Psoas muscle (tissue), 8 donors: ENCODE measurements at regions of chr12 and their contacts with region 1.

Region 1: DNA sequence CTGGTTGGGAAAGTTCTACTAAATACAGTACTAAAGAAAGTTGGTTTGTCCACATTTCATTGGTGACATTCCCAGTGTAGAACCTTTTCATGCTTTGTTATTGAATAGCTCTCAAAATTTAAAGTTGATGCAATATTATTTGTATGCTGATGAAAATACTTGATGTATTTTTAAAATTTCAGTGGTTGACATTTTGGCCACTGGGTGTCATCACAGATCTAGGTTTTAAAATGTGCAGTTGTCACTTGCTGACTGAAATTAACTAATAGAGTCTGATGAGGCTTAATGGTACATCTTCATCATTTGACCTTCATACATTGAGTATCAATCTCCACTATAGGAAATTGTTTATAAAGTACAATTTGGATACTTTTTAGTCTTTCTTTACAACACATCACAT is 37.1 kb downstream of the CMAS start:
- DNase-seq: no peak
- ATAC-seq: no peak
- H3K4me3 ChIP-seq: no peak overlapping the region
- H3K27ac ChIP-seq: no peak overlapping the region
- H3K4me1 ChIP-seq: no peaks in the 10 kb centered on the region
- H3K27me3 ChIP-seq: no peaks in the 10 kb centered on the region
- CTCF ChIP-seq: peak; percentile 38

Region 2: GRCh38 chr12:21677622-21678277 is 405.4 kb before region 1 on chr12:
- intact Hi-C with region 1: no loop called
- DNase-seq: no peak
- ATAC-seq: no peak
- H3K4me3 ChIP-seq: no peak overlapping the region
- H3K27ac ChIP-seq: no peak overlapping the region
- H3K4me1 ChIP-seq: no peaks in the 10 kb centered on the region
- H3K27me3 ChIP-seq: no peaks in the 10 kb centered on the region
- CTCF ChIP-seq: no peak

Region 3: GRCh38 chr12:22443379-22444316 is 360.5 kb after region 1 on chr12:
- intact Hi-C with region 1: loop called (anchors 5 kb)
- DNase-seq: peak; percentile 18 to 49
- ATAC-seq: peak; percentile 78 to 94 (median 92)
- H3K4me3 ChIP-seq: no peak overlapping the region
- H3K27ac ChIP-seq: no peak overlapping the region
- H3K4me1 ChIP-seq: no peaks in the 10 kb centered on the region
- H3K27me3 ChIP-seq: no peaks in the 10 kb centered on the region
- CTCF ChIP-seq: peak; percentile 71

Region 4: DNA sequence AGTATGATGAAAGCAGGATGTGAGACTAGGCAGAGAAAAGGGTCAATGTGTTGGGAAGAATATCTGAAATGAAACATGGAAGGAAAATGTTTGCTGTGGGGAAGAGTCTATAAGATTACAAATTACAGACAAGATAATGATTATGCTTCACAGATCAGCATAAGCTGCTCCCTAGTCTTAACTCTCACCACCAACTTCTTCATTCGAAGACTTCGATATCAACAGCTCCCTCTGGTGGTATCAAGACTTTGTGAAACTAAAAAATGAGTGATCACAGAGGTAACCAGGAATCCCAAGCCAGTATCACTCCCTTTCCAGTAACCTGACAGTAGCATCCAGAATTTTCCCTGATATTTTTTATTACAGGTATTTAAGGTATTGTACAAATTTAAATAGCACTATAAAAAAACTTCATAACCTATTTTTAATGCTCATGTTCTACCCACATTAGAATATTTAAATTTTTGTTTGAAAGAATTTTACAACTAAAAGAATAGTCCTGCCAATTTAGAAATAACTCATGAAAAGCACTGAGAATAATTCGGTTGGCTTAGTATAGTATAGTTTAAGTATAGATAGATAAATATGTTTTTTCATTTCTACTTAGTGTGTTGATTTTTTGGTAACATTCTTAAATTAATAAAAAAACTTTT is 376.8 kb after region 1 on chr12:
- intact Hi-C with region 1: loop called in 1 of 2 experiments (anchors 5 kb)
- DNase-seq: no peak
- ATAC-seq: peak in 1 of 4 donors; percentile 54
- H3K4me3 ChIP-seq: no peak overlapping the region
- H3K27ac ChIP-seq: no peak overlapping the region
- H3K4me1 ChIP-seq: no peaks in the 10 kb centered on the region
- H3K27me3 ChIP-seq: no peaks in the 10 kb centered on the region
- CTCF ChIP-seq: peak; percentile 48